ENCODE measurements at regions of chr12 and their contacts with region 1.

Region 1: DNA sequence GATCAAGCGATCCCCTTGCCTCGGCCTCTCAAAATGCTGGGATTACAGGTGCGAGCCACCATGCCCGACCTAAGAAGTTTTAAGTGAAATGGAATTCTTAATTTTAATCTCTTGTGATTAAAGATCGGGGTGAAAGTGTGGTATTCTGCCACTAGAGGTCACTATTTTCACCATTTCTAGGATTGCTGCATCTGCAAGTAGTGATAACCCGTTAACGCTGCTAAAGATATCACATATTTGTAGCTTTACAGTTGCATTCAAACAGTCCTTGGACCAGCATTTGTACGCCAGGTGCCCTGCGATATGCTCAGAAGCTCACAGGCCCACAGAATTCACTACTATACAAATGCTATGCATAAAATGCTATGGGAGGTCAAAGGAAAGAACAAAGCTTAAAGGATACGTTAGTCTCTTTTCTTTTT is 19.3 kb downstream of the CCDC62 start:
- DNase-seq: peak; percentile 82
- H3K4me3 ChIP-seq: no peak overlapping the region
- H3K27ac ChIP-seq: no peak overlapping the region
- H3K4me1 ChIP-seq: peaks cover 3% of the 10 kb centered on the region
- CTCF ChIP-seq: peak; percentile 93

Region 2: GRCh38 chr12:122646517-122647217 is 147.0 kb before region 1 on chr12:
- CTCF ChIA-PET with region 1: no interaction called
- POLR2A ChIA-PET with region 1: no interaction called
- intact Hi-C with region 1: no loop called
- DNase-seq: peak; percentile 27
- H3K4me3 ChIP-seq: no peak overlapping the region
- H3K27ac ChIP-seq: no peak overlapping the region
- H3K4me1 ChIP-seq: peaks cover 7% of the 10 kb centered on the region
- CTCF ChIP-seq: no peak

Region 3: DNA sequence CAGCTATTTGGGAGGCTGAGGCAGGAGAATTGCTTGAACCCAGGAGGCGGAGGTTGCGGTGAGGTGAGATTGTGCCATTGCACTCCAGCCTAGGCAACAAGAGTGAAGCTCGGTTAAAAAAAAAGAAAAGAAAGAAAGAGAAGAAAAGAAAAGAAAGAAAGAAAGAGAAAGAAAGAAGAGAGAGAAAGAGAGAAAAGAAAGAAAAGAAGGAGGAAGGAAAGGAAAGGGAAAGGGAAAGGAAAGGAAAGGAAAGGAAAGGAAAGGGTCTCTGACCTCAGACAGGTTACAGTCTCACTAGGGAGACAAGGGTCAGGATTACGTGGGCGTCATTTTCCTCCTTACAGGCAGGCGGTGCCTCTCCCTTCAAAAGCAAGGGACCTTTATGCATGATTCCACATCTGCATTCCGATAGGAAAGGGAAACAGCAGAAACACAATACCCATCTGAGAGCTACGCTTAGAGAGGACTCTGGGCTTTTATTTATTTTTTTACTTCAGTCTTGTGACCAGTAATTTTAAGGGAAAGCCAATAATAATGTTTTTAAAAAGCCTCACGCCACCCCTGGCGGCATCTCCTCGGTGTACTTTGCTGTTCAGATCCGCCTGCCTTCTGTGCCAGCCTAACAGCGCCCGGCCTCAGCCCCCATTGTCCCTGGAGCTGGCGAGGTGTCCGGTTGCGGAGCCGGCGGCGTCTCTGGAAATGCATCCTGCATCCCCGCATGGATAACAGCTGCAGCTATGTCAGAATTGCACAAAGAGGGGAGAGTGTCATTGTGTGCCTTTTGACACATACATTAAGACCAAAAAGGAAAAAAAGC is 40.6 kb after region 1 on chr12:
- CTCF ChIA-PET with region 1: interaction called, 3 read pairs
- POLR2A ChIA-PET with region 1: interaction called, 5 read pairs
- intact Hi-C with region 1: loop called (anchors 5 kb)
- DNase-seq: no peak
- H3K4me3 ChIP-seq: peak overlapping the region; percentile 74
- H3K27ac ChIP-seq: peak overlapping the region; percentile 13
- H3K4me1 ChIP-seq: peaks cover 34% of the 10 kb centered on the region
- CTCF ChIP-seq: peak; percentile 38; the same call in 1 of the 2 replicates

Region 4: DNA sequence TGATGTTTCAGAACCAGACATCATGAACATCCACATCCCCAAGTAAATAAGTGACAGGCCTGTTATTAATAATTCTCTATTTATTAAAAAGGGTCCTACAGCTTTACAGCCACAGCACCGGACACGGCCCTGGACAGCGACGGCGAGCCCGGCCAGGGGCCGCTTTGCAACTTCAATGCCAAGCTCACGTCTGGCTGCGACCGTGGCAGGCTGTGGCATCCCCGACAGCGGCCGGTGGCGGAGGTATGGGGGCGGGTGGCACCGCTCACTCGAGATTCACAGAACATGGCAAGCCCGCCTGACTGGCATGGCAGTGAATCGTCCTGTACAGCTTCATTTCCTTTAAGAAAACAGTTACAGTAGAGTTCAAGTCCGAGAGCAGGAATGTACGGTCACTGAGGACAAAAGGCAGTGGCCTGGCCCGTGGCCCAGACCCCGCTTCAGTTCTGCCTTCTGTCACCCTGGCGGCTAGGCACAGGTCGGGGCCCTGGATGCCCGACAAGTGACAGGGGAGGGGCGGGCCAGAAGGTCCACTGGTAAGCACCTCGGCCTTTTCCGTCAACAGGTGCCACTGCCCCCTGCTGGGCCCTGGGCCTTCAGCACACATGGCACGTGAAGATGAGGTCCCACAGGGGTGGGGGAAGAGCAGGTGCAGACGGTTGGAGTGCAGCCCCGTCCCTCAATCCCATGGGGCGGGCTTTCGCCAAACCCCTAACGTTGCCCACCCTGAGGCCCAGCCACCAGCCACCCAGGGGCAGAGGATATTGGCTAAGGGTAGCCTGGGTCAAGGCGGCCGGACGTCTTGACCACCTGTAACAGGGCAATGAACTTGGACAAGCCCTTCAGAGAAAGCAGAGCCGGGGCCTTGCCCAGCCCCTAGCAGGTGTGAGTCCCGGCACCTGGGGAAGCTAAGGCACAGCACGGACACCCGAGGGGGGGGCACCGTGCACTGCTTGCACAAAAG is 71.9 kb after region 1 on chr12:
- CTCF ChIA-PET with region 1: interaction called, 8 read pairs
- POLR2A ChIA-PET with region 1: no interaction called
- intact Hi-C with region 1: loop called (anchors 2 kb)
- DNase-seq: peak; percentile 71
- H3K4me3 ChIP-seq: no peak overlapping the region
- H3K27ac ChIP-seq: no peak overlapping the region
- H3K4me1 ChIP-seq: peaks cover 24% of the 10 kb centered on the region
- CTCF ChIP-seq: peak; percentile 70

Region 5: GRCh38 chr12:122951979-122952892 is 158.5 kb after region 1 on chr12:
- CTCF ChIA-PET with region 1: no interaction called
- POLR2A ChIA-PET with region 1: no interaction called
- intact Hi-C with region 1: loop called (anchors 1 kb)
- DNase-seq: peak; percentile 83
- H3K4me3 ChIP-seq: no peak overlapping the region
- H3K27ac ChIP-seq: no peak overlapping the region
- H3K4me1 ChIP-seq: no peaks in the 10 kb centered on the region
- CTCF ChIP-seq: peak; percentile 95

Region 6: DNA sequence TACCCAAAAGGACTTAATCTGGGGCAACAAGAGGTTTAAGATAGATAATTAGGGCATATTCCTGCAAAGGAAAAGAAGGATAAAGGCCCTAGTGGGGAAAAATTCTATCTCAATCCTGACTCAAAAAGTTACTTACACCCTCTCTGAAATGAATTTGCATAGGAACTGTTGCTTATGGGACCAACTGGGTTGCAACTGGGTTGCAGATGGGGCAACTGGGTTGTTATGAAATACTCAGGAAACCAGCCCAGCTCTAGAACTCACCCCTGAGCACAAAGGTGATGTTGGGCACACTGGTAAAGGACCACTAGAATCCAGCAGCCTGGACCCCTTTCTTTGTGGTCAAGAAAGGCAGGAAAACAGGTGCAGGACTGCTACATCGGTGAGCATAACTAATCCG is 757.0 kb after region 1 on chr12:
- CTCF ChIA-PET with region 1: no interaction called
- POLR2A ChIA-PET with region 1: no interaction called
- intact Hi-C with region 1: no loop called
- DNase-seq: no peak
- H3K4me3 ChIP-seq: no peak overlapping the region
- H3K27ac ChIP-seq: no peak overlapping the region
- H3K4me1 ChIP-seq: no peaks in the 10 kb centered on the region
- CTCF ChIP-seq: no peak

Measured in OCI-LY7 (cell line).